ENCODE measurements at regions of chr3 and their contacts with region 1.

Region 1: DNA sequence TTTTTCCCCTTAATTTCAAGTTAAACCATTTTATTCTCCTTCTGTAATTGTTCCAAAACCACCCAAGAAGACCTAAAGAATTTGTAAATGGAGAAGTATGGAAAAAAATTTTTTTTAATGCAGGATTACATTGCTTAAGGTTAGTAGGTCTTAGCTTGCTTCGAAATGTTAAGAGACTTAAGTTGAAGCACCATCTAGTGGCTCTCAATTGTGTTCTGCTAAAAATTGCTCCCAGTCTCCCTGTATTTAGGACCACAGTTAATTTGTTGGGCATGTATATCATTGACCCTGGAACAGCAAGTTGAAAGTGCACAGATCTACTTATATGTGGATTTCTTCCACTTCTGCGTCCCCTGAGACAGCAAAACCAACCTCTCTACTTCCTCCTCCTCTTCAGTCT is 32.4 kb downstream of the CD200R1L start:
- DNase-seq: no peak
- H3K4me3 ChIP-seq: no peak overlapping the region
- H3K27ac ChIP-seq: no peak overlapping the region
- H3K4me1 ChIP-seq: no peaks in the 10 kb centered on the region
- H3K27me3 ChIP-seq: no peaks in the 10 kb centered on the region
- CTCF ChIP-seq: peak in 2 of 4 experiments; percentile 34 to 40
- POLR2A ChIP-seq: no peak

Region 2: GRCh38 chr3:112582244-112582874 is 231.9 kb before region 1 on chr3:
- intact Hi-C with region 1: loop called (anchors 2 kb)
- DNase-seq: no peak
- H3K4me3 ChIP-seq: no peak overlapping the region
- H3K27ac ChIP-seq: no peak overlapping the region
- H3K4me1 ChIP-seq: no peaks in the 10 kb centered on the region
- H3K27me3 ChIP-seq: no peaks in the 10 kb centered on the region
- CTCF ChIP-seq: peak in 3 of 4 experiments; percentile 26 to 56 (median 53)
- POLR2A ChIP-seq: no peak

Region 3: GRCh38 chr3:112642912-112643506 is 171.3 kb before region 1 on chr3:
- intact Hi-C with region 1: loop called (anchors 2 kb)
- DNase-seq: peak; percentile 75
- H3K4me3 ChIP-seq: no peak overlapping the region
- H3K27ac ChIP-seq: no peak overlapping the region
- H3K4me1 ChIP-seq: no peaks in the 10 kb centered on the region
- H3K27me3 ChIP-seq: peaks cover 5% of the 10 kb centered on the region
- CTCF ChIP-seq: peak; percentile 28 to 70 (median 61)
- POLR2A ChIP-seq: no peak

Region 4: GRCh38 chr3:112676659-112677234 is 137.5 kb before region 1 on chr3:
- intact Hi-C with region 1: no loop called
- DNase-seq: no peak
- H3K4me3 ChIP-seq: no peak overlapping the region
- H3K27ac ChIP-seq: no peak overlapping the region
- H3K4me1 ChIP-seq: no peaks in the 10 kb centered on the region
- H3K27me3 ChIP-seq: no peaks in the 10 kb centered on the region
- CTCF ChIP-seq: no peak
- POLR2A ChIP-seq: no peak

Region 5: GRCh38 chr3:112734718-112735350 is 79.4 kb before region 1 on chr3:
- intact Hi-C with region 1: loop called (anchors 10 kb)
- DNase-seq: peak; percentile 17
- H3K4me3 ChIP-seq: no peak overlapping the region
- H3K27ac ChIP-seq: no peak overlapping the region
- H3K4me1 ChIP-seq: no peaks in the 10 kb centered on the region
- H3K27me3 ChIP-seq: no peaks in the 10 kb centered on the region
- CTCF ChIP-seq: peak; percentile 19 to 54 (median 45)
- POLR2A ChIP-seq: no peak

Measured in prostate gland (tissue), 2 donors.